Mammary epithelial cell (primary cell): ENCODE measurements at regions of chr12 and their contacts with region 1.

Region 1: GRCh38 chr12:50006789-50007436 is 18.4 kb downstream of the RACGAP1 start:
- DNase-seq: no peak
- H3K4me3 ChIP-seq: no peak overlapping the region
- H3K27ac ChIP-seq: no peak overlapping the region
- H3K4me1 ChIP-seq: no peaks in the 10 kb centered on the region
- H3K27me3 ChIP-seq: no peaks in the 10 kb centered on the region
- CTCF ChIP-seq: no peak

Region 2: GRCh38 chr12:49200919-49201594 is 805.9 kb before region 1 on chr12:
- CTCF ChIA-PET with region 1: no interaction called
- dilution Hi-C with region 1: no loop called
- in situ Hi-C with region 1: no loop called
- intact Hi-C with region 1: no loop called
- DNase-seq: peak; percentile 76
- H3K4me3 ChIP-seq: peak overlapping the region in 1 of 3 experiments; percentile 11
- H3K27ac ChIP-seq: peak overlapping the region; percentile 96
- H3K4me1 ChIP-seq: peaks cover 21% of the 10 kb centered on the region
- H3K27me3 ChIP-seq: no peaks in the 10 kb centered on the region
- CTCF ChIP-seq: no peak

Region 3: DNA sequence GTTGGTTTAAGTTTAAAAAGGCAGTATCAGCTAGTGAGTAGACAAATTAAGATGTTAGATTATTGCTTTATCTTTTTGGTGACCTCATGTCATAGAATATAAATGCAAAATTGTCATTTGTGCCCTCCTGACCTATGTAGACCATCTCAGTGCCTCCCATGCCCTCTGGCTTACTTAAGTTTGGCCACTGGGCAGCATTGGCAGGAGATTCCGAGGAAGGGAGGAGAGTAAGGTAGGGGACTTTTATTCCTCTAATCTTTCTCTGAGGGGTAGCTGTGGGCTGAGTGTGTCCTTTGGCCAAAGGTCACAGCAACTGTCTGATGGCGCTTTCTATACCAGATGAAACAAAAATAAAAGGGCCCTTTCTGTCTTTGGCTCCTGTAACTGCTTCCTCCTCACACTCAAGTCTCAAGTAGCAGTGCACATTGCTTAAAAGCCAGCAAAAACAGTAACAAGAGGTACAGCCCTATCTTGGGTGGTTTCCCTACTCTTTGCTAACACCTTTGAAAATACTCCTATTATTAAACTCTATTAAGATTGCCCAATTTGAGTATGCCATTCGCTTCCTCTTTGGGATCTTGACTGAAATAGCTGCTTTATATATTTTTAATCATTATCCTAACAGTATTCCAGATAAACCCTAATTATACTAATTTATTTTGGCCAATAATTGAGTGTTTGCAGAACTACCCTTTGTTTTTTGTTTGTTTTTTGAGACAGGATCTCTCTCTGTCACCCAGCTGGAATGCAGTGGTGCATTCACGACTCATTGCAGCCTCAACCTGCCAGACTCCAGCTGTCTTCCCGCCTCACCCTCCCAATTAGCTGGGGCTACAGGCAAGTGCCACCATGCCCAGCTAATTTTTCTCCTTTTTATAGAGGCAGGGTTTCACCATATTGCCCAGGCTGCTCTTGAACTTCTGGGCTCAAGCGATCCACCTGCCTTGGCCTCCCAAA is 524.5 kb before region 1 on chr12:
- CTCF ChIA-PET with region 1: no interaction called
- dilution Hi-C with region 1: no loop called
- in situ Hi-C with region 1: no loop called
- intact Hi-C with region 1: no loop called
- DNase-seq: peak; percentile 55
- H3K4me3 ChIP-seq: no peak overlapping the region
- H3K27ac ChIP-seq: peak overlapping the region; percentile 9
- H3K4me1 ChIP-seq: peaks cover 22% of the 10 kb centered on the region
- H3K27me3 ChIP-seq: no peaks in the 10 kb centered on the region
- CTCF ChIP-seq: no peak

Region 4: DNA sequence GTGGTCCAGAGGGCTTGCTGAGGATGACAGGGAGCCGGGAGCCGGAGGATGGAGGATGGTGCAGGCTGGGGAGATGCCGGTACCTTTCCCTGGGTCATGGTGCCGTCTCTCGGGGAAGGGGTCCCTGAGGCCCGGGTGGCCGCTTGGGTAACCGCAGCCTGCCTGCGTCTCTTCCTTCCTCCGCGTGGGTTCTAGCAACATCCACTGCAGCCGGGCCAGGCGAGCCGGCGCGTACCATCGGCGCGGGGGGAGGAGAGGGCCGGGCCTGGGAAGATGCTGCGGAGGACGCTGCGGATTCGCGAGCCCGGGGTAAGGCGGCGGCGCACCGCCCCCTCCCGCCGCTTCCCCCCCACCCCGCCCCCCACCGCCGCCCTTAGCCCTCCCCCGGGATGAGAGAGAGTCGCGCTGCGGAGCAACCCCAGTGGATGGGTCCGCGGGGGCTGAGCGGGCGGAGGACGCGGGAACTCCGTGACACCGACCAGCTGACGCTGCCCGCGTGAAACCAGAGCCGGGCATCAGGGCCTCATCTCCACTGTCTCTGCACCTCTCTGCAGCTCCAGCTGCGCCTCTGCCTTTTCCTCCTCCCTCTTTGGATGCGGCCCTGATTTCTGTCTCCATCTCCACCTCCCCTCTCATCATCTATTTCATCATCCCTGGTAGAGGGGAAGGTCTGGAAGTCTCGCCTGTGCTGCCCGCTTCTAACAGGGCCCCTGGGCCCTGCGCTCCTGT is 103.1 kb before region 1 on chr12 and contains the start of gene FAIM2:
- CTCF ChIA-PET with region 1: no interaction called
- dilution Hi-C with region 1: loop called (anchors 5 kb)
- in situ Hi-C with region 1: no loop called
- intact Hi-C with region 1: no loop called
- DNase-seq: no peak
- H3K4me3 ChIP-seq: no peak within 1 kb of the TSS
- H3K27ac ChIP-seq: no peak within 1 kb of the TSS
- H3K4me1 ChIP-seq: peaks cover 3% of the 10 kb centered on the region
- H3K27me3 ChIP-seq: no peaks in the 10 kb centered on the region
- CTCF ChIP-seq: no peak
- total RNA-seq, gene FAIM2: not detected

Region 5: DNA sequence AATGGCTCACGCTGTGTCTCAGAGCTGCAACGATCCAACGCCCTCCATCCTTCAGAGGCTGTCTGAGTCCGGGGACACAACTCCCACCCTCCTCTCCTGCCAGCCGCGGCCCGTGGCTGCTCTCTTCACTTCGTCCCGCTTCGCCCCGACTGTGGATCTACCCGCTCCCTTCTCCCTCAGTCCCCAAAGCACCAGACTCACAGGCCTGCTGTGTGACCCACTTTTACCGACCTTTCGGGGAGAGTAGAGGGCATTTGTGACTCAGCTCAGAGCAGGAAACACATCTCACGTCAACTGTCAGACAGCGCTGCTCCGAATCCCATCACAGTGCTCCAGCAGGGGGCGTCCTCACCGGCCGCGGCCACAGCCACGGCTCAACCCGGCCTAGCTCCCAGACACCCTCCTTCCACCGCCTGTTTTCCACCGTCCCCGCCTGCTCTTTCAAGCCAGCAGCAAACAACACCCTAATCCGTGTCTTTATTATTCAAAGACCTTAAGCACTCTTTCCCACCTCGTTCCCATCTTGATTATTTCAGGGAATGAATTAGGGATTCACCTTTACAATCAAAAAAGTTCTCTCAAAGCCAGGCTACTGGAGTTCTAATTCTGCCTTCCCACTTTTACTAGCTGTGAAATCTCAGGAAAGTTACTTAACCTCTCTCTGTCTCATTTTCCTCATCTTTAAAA is 61.4 kb before region 1 on chr12:
- CTCF ChIA-PET with region 1: interaction called, 11 read pairs
- dilution Hi-C with region 1: no loop called
- in situ Hi-C with region 1: no loop called
- intact Hi-C with region 1: no loop called
- DNase-seq: peak; percentile 67
- H3K4me3 ChIP-seq: no peak overlapping the region
- H3K27ac ChIP-seq: no peak overlapping the region
- H3K4me1 ChIP-seq: peaks cover 6% of the 10 kb centered on the region
- H3K27me3 ChIP-seq: no peaks in the 10 kb centered on the region
- CTCF ChIP-seq: peak; percentile 77 to 85

Region 6: DNA sequence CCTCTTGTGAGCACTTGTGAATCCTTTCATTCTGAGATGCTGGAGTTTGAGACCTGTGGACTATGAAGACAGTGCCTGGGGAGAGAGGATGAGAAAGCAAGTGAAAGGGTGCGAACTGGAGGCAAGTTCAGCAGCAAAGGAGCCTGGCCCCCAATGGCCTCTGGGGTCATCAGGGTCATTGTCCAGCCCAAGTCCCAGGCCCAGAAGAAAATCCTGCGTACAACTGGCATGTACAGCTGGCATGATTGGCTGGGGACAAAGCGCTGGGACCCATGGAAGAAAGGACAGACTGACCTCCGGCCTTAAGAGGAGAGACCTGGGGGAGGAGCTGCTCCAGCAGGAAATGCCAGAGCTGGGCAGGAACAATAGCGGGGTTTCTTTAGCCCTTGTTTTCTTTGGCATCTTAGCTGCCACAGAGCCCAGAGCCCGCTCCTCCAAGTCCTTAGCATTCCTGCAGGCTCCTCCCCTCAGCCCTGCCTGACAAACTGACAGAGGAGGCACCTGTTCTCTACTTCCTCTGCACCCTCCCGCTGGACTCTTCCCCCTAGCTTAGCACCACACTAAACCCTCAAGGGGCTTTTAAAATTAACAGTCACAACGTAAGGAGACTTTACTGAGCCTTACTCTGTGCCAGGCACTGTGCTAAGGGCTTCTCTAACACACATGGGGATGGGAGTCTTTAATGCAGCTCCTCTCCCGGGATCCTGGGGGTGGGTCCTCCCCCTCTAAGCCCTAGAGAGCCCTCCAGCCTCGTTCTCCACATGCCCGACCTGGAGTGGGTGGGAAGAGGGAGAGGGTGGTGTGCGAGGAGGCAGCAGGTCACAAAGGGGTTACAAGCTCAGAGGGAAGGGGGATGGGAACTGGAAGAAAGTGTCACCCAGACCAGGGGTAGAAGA is 47.1 kb before region 1 on chr12:
- CTCF ChIA-PET with region 1: no interaction called
- dilution Hi-C with region 1: loop called (anchors 5 kb)
- in situ Hi-C with region 1: no loop called
- intact Hi-C with region 1: no loop called
- DNase-seq: peak; percentile 58
- H3K4me3 ChIP-seq: no peak overlapping the region
- H3K27ac ChIP-seq: no peak overlapping the region
- H3K4me1 ChIP-seq: peaks cover 36% of the 10 kb centered on the region
- H3K27me3 ChIP-seq: no peaks in the 10 kb centered on the region
- CTCF ChIP-seq: no peak

Region 7: DNA sequence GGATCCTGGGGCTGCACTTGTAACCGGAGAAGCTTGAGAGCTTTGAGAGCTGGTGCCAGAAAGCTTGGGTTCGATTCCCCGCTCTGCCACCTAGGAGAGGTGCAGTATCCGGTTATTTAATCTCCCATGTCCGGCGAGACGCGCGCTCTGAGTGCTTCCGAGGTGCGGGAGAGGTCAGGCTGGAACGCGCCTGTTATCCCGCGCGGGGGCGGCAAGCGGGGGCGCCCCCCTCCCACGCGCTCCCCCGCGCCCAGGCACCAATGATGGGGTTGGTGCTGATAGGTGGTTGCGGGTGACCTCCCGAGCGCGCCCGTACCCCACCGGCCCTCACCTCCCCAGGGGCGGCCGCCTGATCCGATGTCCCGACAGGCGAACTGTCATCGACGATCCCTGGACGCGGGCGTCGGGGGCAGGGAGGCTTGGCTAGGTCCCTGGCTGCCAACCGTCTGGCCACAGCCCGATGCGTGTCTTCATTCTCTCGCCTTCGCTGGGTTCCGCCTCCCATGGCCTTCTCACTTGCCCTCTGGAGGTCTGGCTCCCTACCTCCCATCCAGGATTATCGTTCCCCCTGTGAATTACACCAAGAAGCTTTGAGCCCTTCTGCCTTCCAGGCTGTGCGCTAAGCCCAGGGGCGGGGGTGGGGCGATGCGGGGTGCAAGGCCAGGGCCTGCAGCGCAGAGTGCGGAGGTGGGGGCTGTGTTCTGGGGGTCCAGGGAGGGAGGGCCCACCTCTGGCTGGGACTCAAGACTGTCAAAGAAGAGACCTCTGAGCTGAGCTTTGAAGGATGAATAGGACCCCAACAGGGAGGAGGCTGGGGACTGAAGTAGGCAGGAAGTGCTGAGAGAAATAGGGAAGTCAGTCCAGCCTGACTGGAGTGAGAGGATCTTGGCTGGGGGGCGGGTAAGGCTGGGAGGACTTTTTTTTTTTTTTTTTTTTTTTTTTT is 26.0 kb after region 1 on chr12:
- CTCF ChIA-PET with region 1: no interaction called
- dilution Hi-C with region 1: no loop called
- in situ Hi-C with region 1: no loop called
- intact Hi-C with region 1: no loop called
- DNase-seq: no peak
- H3K4me3 ChIP-seq: no peak overlapping the region
- H3K27ac ChIP-seq: no peak overlapping the region
- H3K4me1 ChIP-seq: peaks cover 3% of the 10 kb centered on the region
- H3K27me3 ChIP-seq: no peaks in the 10 kb centered on the region
- CTCF ChIP-seq: no peak